ENCODE measurements at regions of chr9 and their contacts with region 1.

Region 1: DNA sequence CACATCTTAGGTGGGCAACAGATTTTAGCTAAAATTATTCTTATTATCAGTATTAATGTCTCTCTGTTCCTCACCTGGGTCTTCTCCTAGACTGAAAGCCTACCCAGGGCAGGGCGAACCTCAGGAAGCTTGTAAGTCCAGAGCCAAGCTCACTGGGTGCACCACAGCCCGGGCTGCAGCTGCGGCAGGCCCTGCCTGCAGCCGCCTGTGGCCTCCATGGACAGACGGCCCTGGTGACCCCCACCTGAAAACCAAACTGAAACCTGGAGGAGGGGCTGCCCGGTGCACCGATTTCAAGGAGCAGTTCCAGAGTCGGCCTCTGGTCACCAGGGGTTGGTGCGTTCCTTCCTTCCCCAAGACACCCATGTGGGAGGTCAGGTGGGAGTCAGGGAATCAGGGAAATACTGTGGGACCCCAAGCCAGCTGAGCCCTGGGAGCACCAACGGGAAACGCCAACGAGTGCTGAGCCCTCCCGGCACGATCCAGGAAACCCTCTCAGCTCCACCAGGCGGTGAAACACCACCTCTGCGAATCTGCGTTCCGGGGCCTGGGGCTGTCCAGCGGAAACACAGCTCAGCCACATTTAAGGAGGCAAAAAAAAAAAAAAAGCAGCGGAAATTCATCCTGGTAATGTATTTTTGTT is 68.6 kb upstream of the PPP1R26 start:
- H3K4me3 ChIP-seq: no peak overlapping the region
- H3K27ac ChIP-seq: no peak overlapping the region
- H3K4me1 ChIP-seq: no peaks in the 10 kb centered on the region
- CTCF ChIP-seq: no peak

Region 2: GRCh38 chr9:135077497-135078200 is 333.3 kb before region 1 on chr9:
- CTCF ChIA-PET with region 1: interaction called, 20 read pairs
- POLR2A ChIA-PET with region 1: no interaction called
- H3K4me3 ChIP-seq: no peak overlapping the region
- H3K27ac ChIP-seq: no peak overlapping the region
- H3K4me1 ChIP-seq: no peaks in the 10 kb centered on the region
- CTCF ChIP-seq: no peak

Region 3: GRCh38 chr9:135095470-135096407 is 315.2 kb before region 1 on chr9:
- CTCF ChIA-PET with region 1: interaction called, 110 read pairs
- POLR2A ChIA-PET with region 1: no interaction called
- H3K4me3 ChIP-seq: no peak overlapping the region
- H3K27ac ChIP-seq: no peak overlapping the region
- H3K4me1 ChIP-seq: 0 out of 2 replicates have a peak, but pooled peaks cover 2% of the 10 kb centered on the region
- CTCF ChIP-seq: no peak

Region 4: DNA sequence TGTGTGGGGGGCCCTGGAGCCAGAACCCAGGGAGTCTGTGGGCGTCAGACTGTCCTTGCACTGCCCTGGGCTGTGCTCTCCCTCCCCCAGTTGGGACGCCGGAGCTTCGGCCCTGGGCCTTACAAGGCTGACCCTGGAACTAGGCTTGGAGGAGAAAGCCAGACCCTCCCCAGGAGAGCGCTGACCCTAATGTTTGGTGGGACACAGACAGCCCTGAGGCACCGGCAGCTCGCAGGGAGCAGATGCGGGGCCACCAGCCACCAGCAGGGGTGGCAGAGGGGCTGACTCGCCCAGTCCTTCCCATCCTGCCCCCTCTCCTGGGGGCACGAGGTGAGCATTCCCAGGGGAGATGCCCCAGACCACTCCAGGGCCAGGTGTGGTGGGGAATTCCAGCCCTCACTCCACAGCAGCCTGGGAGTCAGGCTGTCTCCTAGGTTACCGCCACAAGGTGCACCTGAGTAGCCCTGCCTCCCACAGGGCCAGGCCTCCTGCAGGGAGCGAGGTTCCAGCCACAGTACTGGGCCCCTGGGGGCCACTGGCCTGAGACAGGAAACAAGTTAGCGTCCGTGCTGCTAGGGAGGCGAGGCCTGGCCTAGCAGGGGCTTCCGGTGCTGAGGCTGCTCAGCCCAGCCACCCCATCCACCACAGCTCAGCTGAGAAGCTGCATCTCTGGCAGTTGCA is 188.9 kb before region 1 on chr9:
- CTCF ChIA-PET with region 1: no interaction called
- POLR2A ChIA-PET with region 1: no interaction called
- H3K4me3 ChIP-seq: no peak overlapping the region
- H3K27ac ChIP-seq: no peak overlapping the region
- H3K4me1 ChIP-seq: 0 out of 2 replicates have a peak, but pooled peaks cover under 1% of the 10 kb centered on the region
- CTCF ChIP-seq: 0 out of 2 replicates have a peak, but pooled peaks have one; percentile 18

Region 5: GRCh38 chr9:135343837-135344522 is 67.0 kb before region 1 on chr9:
- CTCF ChIA-PET with region 1: interaction called, 14 read pairs
- POLR2A ChIA-PET with region 1: no interaction called
- H3K4me3 ChIP-seq: no peak overlapping the region
- H3K27ac ChIP-seq: no peak overlapping the region
- H3K4me1 ChIP-seq: no peaks in the 10 kb centered on the region
- CTCF ChIP-seq: peak; percentile 90

Region 6: DNA sequence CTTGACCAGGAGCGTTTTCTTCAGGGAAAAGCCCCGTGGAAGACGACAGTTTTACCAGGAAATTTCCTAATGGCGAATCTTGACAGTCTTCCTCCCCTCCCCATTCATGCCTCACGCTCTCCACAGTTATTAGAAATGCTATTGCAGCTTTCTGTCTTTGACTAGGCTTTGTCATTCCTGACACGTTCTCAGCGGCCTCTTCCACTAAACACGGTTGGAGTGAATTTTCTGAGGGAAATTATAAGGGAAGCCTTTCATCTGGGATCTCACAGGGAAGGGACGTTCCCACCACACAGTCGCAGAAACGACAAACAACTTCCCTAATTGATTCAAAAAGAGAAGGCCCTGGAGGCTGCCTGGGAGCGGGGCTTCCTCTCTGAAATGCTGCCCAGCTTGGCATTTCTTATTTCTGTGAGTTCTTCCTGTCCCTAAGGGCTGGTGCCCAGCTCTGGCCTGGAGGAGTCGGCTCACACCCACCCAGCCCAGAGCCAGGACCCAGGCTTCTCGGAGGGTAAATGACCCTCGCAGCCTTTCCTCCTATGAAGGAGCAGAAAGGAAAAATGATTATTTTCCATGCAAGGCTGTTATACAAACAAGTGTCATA is 11.5 kb after region 1 on chr9:
- CTCF ChIA-PET with region 1: interaction called, 11 read pairs
- POLR2A ChIA-PET with region 1: no interaction called
- H3K4me3 ChIP-seq: no peak overlapping the region
- H3K27ac ChIP-seq: no peak overlapping the region
- H3K4me1 ChIP-seq: no peaks in the 10 kb centered on the region
- CTCF ChIP-seq: no peak

Region 7: GRCh38 chr9:135588886-135589595 is 178.1 kb after region 1 on chr9:
- CTCF ChIA-PET with region 1: no interaction called
- POLR2A ChIA-PET with region 1: no interaction called
- H3K4me3 ChIP-seq: no peak overlapping the region
- H3K27ac ChIP-seq: no peak overlapping the region
- H3K4me1 ChIP-seq: no peaks in the 10 kb centered on the region
- CTCF ChIP-seq: no peak

Region 8: GRCh38 chr9:135618866-135619597 is 208.1 kb after region 1 on chr9:
- CTCF ChIA-PET with region 1: no interaction called
- POLR2A ChIA-PET with region 1: no interaction called
- H3K4me3 ChIP-seq: no peak overlapping the region
- H3K27ac ChIP-seq: no peak overlapping the region
- H3K4me1 ChIP-seq: no peaks in the 10 kb centered on the region
- CTCF ChIP-seq: no peak

Region 9: GRCh38 chr9:136201609-136202453 is 790.9 kb after region 1 on chr9:
- CTCF ChIA-PET with region 1: no interaction called
- POLR2A ChIA-PET with region 1: no interaction called
- H3K4me3 ChIP-seq: no peak overlapping the region
- H3K27ac ChIP-seq: no peak overlapping the region
- H3K4me1 ChIP-seq: no peaks in the 10 kb centered on the region; the same call in 1 of the 2 replicates
- CTCF ChIP-seq: no peak

Measured in HEK293 (cell line).